ENCODE measurements at regions of chr1 and their contacts with region 1.

Region 1: GRCh38 chr1:236523701-236524141 is at the start of gene LGALS8:
- DNase-seq: peak; percentile 65 to 93 (median 88)
- ATAC-seq: peak; percentile 80
- H3K4me3 ChIP-seq: peak within 1 kb of the TSS; percentile 78 to 95
- H3K4me3 Mint-ChIP-seq: peak within 1 kb of the TSS; percentile 92
- H3K27ac ChIP-seq: peak within 1 kb of the TSS; percentile 84 to 92
- H3K27ac Mint-ChIP-seq: peak within 1 kb of the TSS; percentile 93
- H3K4me1 ChIP-seq: peaks cover 11% of the 10 kb centered on the region
- H3K4me1 Mint-ChIP-seq: peaks cover 32% of the 10 kb centered on the region
- H3K27me3 ChIP-seq: no peaks in the 10 kb centered on the region
- H3K27me3 Mint-ChIP-seq: peaks cover 3% of the 10 kb centered on the region
- CTCF ChIP-seq: no peak
- total RNA-seq, gene LGALS8: 118 to 125 TPM

Region 2: DNA sequence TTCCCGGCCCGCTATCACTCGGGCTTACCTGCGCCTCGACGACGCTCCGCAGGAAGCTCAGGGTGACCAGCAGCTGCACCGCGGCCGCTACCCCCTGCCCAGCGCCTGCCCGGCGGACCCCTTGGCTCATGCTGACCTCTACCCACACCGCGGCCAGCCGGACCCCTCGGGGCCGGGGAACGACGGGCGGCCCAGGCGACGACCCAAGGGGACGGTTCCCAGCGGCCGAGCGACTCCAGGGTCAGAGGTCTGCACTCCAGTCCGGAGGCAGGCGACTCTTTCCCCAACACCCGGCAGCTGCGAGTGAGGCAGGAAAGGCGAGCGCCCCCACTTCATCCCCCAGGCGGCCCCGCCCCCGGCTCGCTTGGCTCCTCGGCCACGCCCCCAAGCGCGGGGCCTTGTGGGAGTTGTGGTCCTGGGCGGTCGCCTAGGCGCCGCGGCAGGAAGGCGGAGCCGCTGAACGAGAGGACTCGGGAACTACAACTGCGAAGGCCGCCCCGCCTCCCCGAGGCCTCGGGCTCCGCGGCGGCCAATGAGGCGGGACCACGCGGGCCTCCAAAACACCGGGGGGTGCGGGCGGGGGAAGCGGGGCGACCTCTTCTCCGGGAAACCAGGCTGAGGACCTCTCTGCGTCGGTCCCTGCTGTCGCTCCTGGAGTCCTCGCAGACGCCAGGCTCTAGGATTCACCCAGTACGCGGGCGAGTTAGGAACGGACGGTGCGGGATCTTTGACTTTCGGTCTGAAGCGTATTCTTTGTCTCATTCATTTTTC is 241.9 kb before region 1 on chr1 and contains the start of gene ERO1B:
- CTCF ChIA-PET with region 1: no interaction called
- POLR2A ChIA-PET with region 1: interaction called, 5 read pairs
- intact Hi-C with region 1: loop called (anchors 1 to 5 kb)
- DNase-seq: peak; percentile 96 to 99 (median 97)
- ATAC-seq: peak; percentile 93
- H3K4me3 ChIP-seq: peak within 1 kb of the TSS; percentile 75 to 90
- H3K4me3 Mint-ChIP-seq: peak within 1 kb of the TSS; percentile 97
- H3K27ac ChIP-seq: peak within 1 kb of the TSS; percentile 72 to 85
- H3K27ac Mint-ChIP-seq: peak within 1 kb of the TSS; percentile 92
- H3K4me1 ChIP-seq: peaks cover 28% of the 10 kb centered on the region
- H3K4me1 Mint-ChIP-seq: peaks cover 52% of the 10 kb centered on the region
- H3K27me3 ChIP-seq: no peaks in the 10 kb centered on the region
- H3K27me3 Mint-ChIP-seq: no peaks in the 10 kb centered on the region
- CTCF ChIP-seq: no peak
- total RNA-seq, gene ERO1B: 16.2 to 16.6 TPM

Region 3: GRCh38 chr1:236416165-236416564 is 107.6 kb before region 1 on chr1:
- CTCF ChIA-PET with region 1: no interaction called
- POLR2A ChIA-PET with region 1: no interaction called
- intact Hi-C with region 1: loop called in 1 of 2 experiments (anchors 5 kb)
- DNase-seq: peak; percentile 13 to 93 (median 32)
- ATAC-seq: peak; percentile 90
- H3K4me3 ChIP-seq: peak overlapping the region; percentile 21 to 44
- H3K4me3 Mint-ChIP-seq: peak overlapping the region; percentile 65
- H3K27ac ChIP-seq: peak overlapping the region; percentile 40 to 96
- H3K27ac Mint-ChIP-seq: peak overlapping the region; percentile 87
- H3K4me1 ChIP-seq: peaks cover 19% of the 10 kb centered on the region
- H3K4me1 Mint-ChIP-seq: peaks cover 20% of the 10 kb centered on the region
- H3K27me3 ChIP-seq: no peaks in the 10 kb centered on the region
- H3K27me3 Mint-ChIP-seq: no peaks in the 10 kb centered on the region
- CTCF ChIP-seq: no peak

Measured in CD8-positive, alpha-beta T cell (primary cell).